ENCODE measurements at regions of chr6 and their contacts with region 1.

Region 1: GRCh38 chr6:138287144-138287955 is 69.1 kb upstream of the PBOV1 start:
- DNase-seq: peak; percentile 61
- H3K4me3 Mint-ChIP-seq: no peak overlapping the region
- H3K27ac Mint-ChIP-seq: peak overlapping the region; percentile 81
- H3K4me1 Mint-ChIP-seq: peaks cover 20% of the 10 kb centered on the region
- H3K27me3 Mint-ChIP-seq: no peaks in the 10 kb centered on the region
- CTCF ChIP-seq: peak; percentile 40

Region 2: DNA sequence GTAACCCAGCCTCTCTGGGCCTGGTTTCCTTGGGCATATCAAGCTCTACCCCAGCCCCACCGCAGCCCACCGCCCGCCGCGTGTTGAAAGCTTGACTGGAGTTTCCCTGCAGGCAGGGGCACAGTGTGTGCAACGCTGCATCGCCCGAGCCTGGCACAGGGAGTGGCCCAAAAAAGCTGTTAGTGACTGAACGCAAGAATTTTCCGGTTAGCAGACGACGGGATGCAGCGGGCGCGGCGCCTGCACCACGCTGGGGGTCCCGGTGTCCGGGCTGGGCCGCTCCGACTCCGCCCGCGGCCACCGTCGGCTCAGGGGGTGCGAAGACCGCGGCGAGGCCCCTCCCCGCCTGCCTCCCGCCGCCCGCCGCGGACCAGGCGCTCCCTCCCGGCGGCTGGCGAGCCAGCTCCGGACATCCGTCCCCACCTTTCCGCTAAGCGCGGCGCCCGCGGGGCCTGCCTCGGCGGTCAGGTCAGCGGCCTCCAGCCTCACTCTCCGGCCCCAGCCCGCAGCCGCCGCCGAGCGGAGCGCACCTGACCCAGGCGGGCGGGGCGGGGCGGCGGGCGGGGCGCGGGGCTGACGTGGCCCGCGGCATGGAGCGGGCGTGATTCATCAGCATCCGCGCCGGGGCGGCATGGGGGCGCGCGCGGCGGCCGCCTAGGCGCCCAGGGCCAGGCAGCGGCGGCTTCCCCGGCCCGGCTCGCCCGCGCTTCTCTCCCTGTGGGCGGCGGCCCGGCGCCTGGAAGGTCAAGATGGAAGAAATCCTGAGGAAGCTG is 125.8 kb before region 1 on chr6 and contains the start of gene ARFGEF3:
- CTCF ChIA-PET with region 1: no interaction called
- POLR2A ChIA-PET with region 1: no interaction called
- intact Hi-C with region 1: loop called (anchors 2 kb)
- DNase-seq: peak; percentile 68
- H3K4me3 Mint-ChIP-seq: peak within 1 kb of the TSS; percentile 68
- H3K27ac Mint-ChIP-seq: no peak within 1 kb of the TSS
- H3K4me1 Mint-ChIP-seq: no peaks in the 10 kb centered on the region
- H3K27me3 Mint-ChIP-seq: peaks cover 40% of the 10 kb centered on the region
- CTCF ChIP-seq: no peak
- total RNA-seq, gene ARFGEF3: 3.4 and 7.0 TPM in 2 replicates

Region 3: DNA sequence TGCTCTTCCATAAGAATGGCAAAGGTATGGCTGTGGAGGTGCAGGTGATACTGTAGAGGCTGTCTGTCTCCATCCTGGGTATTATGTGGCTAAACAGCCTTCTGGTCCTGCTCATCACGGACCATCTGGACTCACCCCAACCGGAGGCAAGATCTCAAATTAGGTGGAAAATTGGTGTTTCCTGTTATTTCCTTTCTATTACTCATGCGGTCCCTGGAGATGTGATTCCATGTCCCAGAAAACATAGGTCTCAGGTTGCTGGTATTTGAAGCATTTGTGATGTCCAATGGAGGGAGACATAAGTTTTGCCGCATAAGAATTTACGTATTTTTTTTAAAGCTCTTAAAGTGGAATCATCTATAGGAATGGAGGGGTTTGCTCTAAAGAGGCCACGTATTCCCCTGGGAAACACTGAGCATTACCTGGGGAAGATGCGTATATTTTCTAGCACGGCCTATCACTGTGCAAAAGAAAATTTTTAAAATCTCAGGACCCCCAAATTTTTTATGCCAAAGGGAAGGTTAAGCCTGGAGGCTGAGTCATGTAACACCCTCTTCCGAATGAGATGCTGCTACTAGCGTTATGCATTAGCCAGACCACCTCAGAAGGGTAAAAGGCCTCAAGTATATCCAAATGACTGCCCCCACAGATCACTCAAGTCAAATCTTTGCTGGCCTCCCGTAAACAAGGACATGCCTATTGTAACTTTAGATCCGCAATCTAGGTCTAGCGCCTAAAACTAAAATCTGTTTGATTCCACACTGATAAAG is 46.7 kb before region 1 on chr6:
- CTCF ChIA-PET with region 1: no interaction called
- POLR2A ChIA-PET with region 1: no interaction called
- intact Hi-C with region 1: no loop called
- DNase-seq: no peak
- H3K4me3 Mint-ChIP-seq: no peak overlapping the region
- H3K27ac Mint-ChIP-seq: no peak overlapping the region
- H3K4me1 Mint-ChIP-seq: peaks cover 6% of the 10 kb centered on the region
- H3K27me3 Mint-ChIP-seq: no peaks in the 10 kb centered on the region
- CTCF ChIP-seq: no peak

Region 4: DNA sequence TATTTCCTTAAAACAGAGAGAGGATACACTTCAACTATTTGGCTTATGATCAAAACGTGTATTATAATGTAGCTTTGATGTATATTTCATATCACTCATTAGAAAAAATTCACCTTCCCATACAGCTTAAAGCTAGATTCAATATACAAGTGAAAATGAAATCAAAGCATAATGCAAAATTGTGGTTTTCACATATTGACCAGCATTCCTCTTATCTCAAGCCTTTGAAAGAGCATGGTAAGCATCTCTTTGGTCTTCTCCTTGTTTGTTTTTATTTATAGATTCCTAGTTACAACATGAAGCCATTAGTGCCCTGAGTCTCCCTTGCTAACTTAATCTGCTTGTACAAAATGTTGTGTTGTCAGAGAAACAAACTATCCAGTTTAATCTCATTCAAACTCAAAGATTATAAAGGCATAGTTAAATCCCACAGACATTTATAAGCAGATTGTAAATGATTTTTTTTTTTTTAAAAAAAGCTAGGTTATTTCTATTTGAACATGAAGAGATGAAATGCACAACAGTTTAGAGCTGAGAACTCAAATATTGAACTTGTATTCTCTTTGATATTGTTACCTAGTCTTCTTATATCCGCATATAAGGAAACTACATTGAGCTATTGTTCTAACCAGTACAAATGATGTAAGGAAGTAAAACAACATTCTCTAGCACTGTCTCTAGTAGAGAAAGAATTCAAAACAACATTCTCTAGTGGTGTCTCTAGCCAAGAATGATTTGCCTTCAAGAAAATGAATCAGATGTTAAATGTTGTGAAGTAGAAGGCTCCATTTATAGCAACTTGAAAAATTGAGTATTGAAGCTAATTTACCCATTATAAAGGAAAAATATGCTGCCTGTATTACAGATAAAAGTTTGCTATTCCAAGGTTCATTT is 59.2 kb after region 1 on chr6:
- CTCF ChIA-PET with region 1: no interaction called
- POLR2A ChIA-PET with region 1: no interaction called
- intact Hi-C with region 1: no loop called
- DNase-seq: no peak
- H3K4me3 Mint-ChIP-seq: no peak overlapping the region
- H3K27ac Mint-ChIP-seq: no peak overlapping the region
- H3K4me1 Mint-ChIP-seq: no peaks in the 10 kb centered on the region
- H3K27me3 Mint-ChIP-seq: no peaks in the 10 kb centered on the region
- CTCF ChIP-seq: no peak